Heart left ventricle (tissue), 16 donors: ENCODE measurements at regions of chr13 and their contacts with region 1.

Region 1: GRCh38 chr13:35630551-35631275 is 154.2 kb upstream of the MAB21L1 start:
- DNase-seq: no peak
- ATAC-seq: peak in 3 of 4 donors; percentile 70 to 82 (median 79)
- H3K4me3 ChIP-seq: no peak overlapping the region
- H3K27ac ChIP-seq: no peak overlapping the region
- H3K4me1 ChIP-seq: no peaks in the 10 kb centered on the region
- H3K27me3 ChIP-seq: no peaks in the 10 kb centered on the region
- CTCF ChIP-seq: peak; percentile 44 to 77 (median 69)
- POLR2A ChIP-seq: no peak

Region 2: GRCh38 chr13:35818633-35819067 is 187.9 kb after region 1 on chr13:
- intact Hi-C with region 1: loop called in 1 of 10 experiments (anchors 10 kb)
- DNase-seq: no peak
- ATAC-seq: peak in 2 of 4 donors; percentile 9 to 29
- H3K4me3 ChIP-seq: no peak overlapping the region
- H3K27ac ChIP-seq: no peak overlapping the region
- H3K4me1 ChIP-seq: no peaks in the 10 kb centered on the region
- H3K27me3 ChIP-seq: no peaks in the 10 kb centered on the region
- CTCF ChIP-seq: peak; percentile 54 to 80 (median 74)
- POLR2A ChIP-seq: no peak